PC-9 (cell line): ENCODE measurements at regions of chr6 and their contacts with region 1.

Region 1: DNA sequence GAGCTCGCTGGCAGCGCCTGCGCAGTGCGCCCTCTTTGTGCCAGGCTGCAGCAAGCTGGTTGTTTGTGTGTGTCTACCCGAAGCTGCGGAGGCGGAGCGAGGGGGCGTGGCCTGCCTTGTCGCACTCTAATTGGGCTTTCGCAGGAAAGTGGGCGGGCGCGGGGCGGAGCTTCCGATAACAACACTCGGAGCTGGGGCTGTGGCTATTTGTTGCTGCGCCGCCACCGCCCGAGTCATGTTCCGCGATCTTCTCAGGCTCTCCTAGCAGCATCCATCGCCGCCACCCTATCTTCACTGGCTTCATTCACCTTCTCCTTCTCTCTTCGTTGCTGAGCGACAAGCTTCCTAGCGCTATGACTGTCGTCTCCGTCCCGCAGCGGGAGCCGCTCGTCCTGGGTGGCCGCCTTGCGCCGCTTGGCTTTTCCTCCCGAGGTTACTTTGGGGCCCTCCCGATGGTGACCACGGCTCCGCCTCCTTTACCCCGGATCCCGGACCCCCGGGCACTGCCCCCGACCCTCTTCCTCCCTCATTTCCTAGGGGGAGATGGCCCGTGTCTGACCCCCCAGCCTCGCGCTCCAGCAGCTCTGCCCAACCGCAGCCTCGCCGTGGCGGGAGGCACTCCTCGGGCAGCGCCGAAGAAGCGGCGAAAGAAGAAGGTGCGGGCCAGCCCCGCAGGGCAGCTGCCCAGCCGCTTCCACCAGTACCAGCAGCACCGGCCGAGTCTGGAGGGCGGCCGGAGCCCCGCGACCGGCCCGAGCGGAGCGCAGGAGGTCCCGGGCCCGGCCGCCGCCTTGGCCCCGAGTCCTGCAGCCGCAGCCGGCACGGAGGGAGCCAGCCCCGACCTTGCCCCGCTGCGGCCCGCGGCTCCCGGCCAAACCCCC is at the start of gene PNRC1:
- DNase-seq: peak; percentile 91 to 98
- H3K4me3 ChIP-seq: peak within 1 kb of the TSS; percentile 98
- H3K27ac ChIP-seq: peak within 1 kb of the TSS; percentile 63
- H3K4me1 ChIP-seq: no peaks in the 10 kb centered on the region; the same call in 1 of the 2 replicates
- H3K27me3 ChIP-seq: no peaks in the 10 kb centered on the region
- CTCF ChIP-seq: no peak
- total RNA-seq, gene PNRC1: 58.3 and 66.9 TPM in 2 replicates

Region 2: DNA sequence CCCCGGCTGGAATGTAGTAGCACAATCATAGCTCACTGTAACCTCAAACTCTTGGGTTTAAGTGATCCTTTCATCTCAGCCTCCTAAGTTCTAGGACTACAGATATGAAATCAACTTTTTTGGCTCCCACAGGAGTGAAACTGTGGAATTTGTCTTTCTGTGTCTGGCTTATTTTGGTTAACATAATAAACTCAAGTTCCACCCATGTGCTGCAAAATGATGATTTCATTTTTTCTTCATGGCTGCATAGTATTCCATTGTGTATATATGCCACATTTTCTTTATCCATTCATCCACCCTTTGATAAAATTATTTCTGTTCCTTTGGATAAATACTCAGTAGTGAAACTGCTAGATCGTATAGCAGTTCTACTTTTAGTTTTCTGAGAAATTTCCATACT is 147.3 kb before region 1 on chr6:
- CTCF ChIA-PET with region 1: no interaction called
- POLR2A ChIA-PET with region 1: interaction called, 10 read pairs
- intact Hi-C with region 1: no loop called
- DNase-seq: no peak
- H3K4me3 ChIP-seq: no peak overlapping the region
- H3K27ac ChIP-seq: no peak overlapping the region
- H3K4me1 ChIP-seq: no peaks in the 10 kb centered on the region
- H3K27me3 ChIP-seq: no peaks in the 10 kb centered on the region
- CTCF ChIP-seq: no peak

Region 3: DNA sequence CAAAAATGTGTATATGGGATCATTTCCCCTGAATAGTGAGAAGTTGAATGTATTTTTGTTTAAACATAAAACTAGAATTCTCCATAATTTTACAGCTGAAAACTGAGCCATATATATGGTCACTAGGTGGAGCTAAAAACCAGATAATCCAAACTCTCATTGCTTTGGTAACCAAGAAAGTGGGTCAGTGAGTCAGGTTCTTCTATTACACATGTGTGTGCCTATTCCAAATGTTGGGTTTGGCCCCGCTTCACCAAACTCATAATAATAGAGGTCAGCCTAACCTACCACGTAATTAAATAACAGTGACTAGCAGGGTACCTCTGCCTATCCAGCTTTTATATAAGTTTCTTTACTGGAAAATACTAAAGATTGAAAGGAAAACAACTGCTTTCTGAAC is 98.1 kb before region 1 on chr6:
- CTCF ChIA-PET with region 1: interaction called, 5 read pairs
- POLR2A ChIA-PET with region 1: no interaction called
- intact Hi-C with region 1: loop called (anchors 2 kb)
- DNase-seq: peak in 1 of 2 experiments; percentile 42
- H3K4me3 ChIP-seq: no peak overlapping the region
- H3K27ac ChIP-seq: no peak overlapping the region
- H3K4me1 ChIP-seq: no peaks in the 10 kb centered on the region
- H3K27me3 ChIP-seq: no peaks in the 10 kb centered on the region
- CTCF ChIP-seq: peak; percentile 77

Region 4: GRCh38 chr6:89145787-89146646 is 65.2 kb after region 1 on chr6 and contains the start of gene PM20D2:
- CTCF ChIA-PET with region 1: no interaction called
- POLR2A ChIA-PET with region 1: interaction called, 5 read pairs
- intact Hi-C with region 1: loop called (anchors 2 kb)
- DNase-seq: peak in 1 of 2 experiments; percentile 76
- H3K4me3 ChIP-seq: peak within 1 kb of the TSS; percentile 80
- H3K27ac ChIP-seq: peak within 1 kb of the TSS; percentile 85
- H3K4me1 ChIP-seq: peaks cover 32% of the 10 kb centered on the region; the same call in 1 of the 2 replicates
- H3K27me3 ChIP-seq: no peaks in the 10 kb centered on the region
- CTCF ChIP-seq: no peak
- total RNA-seq, gene PM20D2: 21.9 and 28.8 TPM in 2 replicates

Region 5: GRCh38 chr6:89297695-89298351 is 217.0 kb after region 1 on chr6:
- CTCF ChIA-PET with region 1: no interaction called
- POLR2A ChIA-PET with region 1: interaction called, 22 read pairs
- intact Hi-C with region 1: loop called (anchors 2 kb)
- DNase-seq: peak; percentile 87 to 96
- H3K4me3 ChIP-seq: peak overlapping the region; percentile 37; the same call in 1 of the 2 replicates
- H3K27ac ChIP-seq: peak overlapping the region; percentile 100
- H3K4me1 ChIP-seq: peaks cover 36% of the 10 kb centered on the region
- H3K27me3 ChIP-seq: no peaks in the 10 kb centered on the region
- CTCF ChIP-seq: no peak